ENCODE measurements at regions of chr5 and their contacts with region 1.

Region 1: GRCh38 chr5:67301285-67301903 is 104.8 kb upstream of the CD180 start:
- DNase-seq: peak; percentile 88
- H3K4me3 ChIP-seq: no peak overlapping the region
- H3K27ac ChIP-seq: peak overlapping the region; percentile 90
- H3K4me1 ChIP-seq: peaks cover 56% of the 10 kb centered on the region
- H3K27me3 ChIP-seq: no peaks in the 10 kb centered on the region
- CTCF ChIP-seq: no peak
- POLR2A ChIP-seq: peak; percentile 20

Region 2: GRCh38 chr5:66840511-66841013 is 460.8 kb before region 1 on chr5:
- CTCF ChIA-PET with region 1: no interaction called
- POLR2A ChIA-PET with region 1: no interaction called
- dilution Hi-C with region 1: no loop called
- intact Hi-C with region 1: loop called (anchors 10 kb)
- DNase-seq: no peak
- H3K4me3 ChIP-seq: no peak overlapping the region
- H3K27ac ChIP-seq: no peak overlapping the region
- H3K4me1 ChIP-seq: peaks cover 29% of the 10 kb centered on the region
- H3K27me3 ChIP-seq: no peaks in the 10 kb centered on the region
- CTCF ChIP-seq: no peak
- POLR2A ChIP-seq: no peak

Region 3: GRCh38 chr5:67268231-67269021 is 33.0 kb before region 1 on chr5:
- CTCF ChIA-PET with region 1: interaction called, 6 read pairs
- POLR2A ChIA-PET with region 1: no interaction called
- dilution Hi-C with region 1: no loop called
- intact Hi-C with region 1: loop called (anchors 1 kb)
- DNase-seq: peak; percentile 84
- H3K4me3 ChIP-seq: peak overlapping the region in 1 of 3 experiments; percentile 30
- H3K27ac ChIP-seq: peak overlapping the region; percentile 78
- H3K4me1 ChIP-seq: peaks cover 25% of the 10 kb centered on the region
- H3K27me3 ChIP-seq: no peaks in the 10 kb centered on the region
- CTCF ChIP-seq: no peak
- POLR2A ChIP-seq: no peak

Region 4: GRCh38 chr5:67404256-67405100 is 103.1 kb after region 1 on chr5:
- CTCF ChIA-PET with region 1: no interaction called
- POLR2A ChIA-PET with region 1: no interaction called
- dilution Hi-C with region 1: no loop called
- intact Hi-C with region 1: loop called (anchors 2 kb)
- DNase-seq: peak; percentile 90
- H3K4me3 ChIP-seq: no peak overlapping the region
- H3K27ac ChIP-seq: peak overlapping the region; percentile 100
- H3K4me1 ChIP-seq: peaks cover 35% of the 10 kb centered on the region
- H3K27me3 ChIP-seq: no peaks in the 10 kb centered on the region
- CTCF ChIP-seq: no peak
- POLR2A ChIP-seq: no peak

Region 5: DNA sequence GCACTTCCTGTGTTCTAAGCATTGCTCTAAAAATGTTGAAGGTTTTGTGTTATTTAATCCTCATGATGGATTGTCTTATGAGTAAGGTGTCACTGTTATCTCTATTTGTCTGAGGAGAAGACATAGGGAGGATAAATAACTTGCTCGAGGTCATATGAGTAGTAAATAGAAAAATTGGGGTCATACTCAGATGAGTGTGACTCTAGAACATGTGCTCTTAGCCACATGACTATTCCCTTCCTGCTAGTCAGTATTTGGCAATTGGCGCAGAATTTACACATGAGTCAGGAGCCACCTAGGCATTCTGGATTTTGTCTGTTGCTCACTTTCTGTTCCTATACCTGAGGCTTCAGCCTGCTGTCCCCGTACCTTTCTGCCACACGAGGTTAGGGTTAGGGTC is 129.8 kb after region 1 on chr5:
- CTCF ChIA-PET with region 1: no interaction called
- POLR2A ChIA-PET with region 1: no interaction called
- dilution Hi-C with region 1: no loop called
- intact Hi-C with region 1: no loop called
- DNase-seq: no peak
- H3K4me3 ChIP-seq: no peak overlapping the region
- H3K27ac ChIP-seq: no peak overlapping the region
- H3K4me1 ChIP-seq: no peaks in the 10 kb centered on the region
- H3K27me3 ChIP-seq: no peaks in the 10 kb centered on the region
- CTCF ChIP-seq: no peak
- POLR2A ChIP-seq: no peak

Region 6: GRCh38 chr5:67998709-67999261 is 697.4 kb after region 1 on chr5:
- CTCF ChIA-PET with region 1: no interaction called
- POLR2A ChIA-PET with region 1: no interaction called
- dilution Hi-C with region 1: no loop called
- intact Hi-C with region 1: loop called (anchors 2 kb)
- DNase-seq: peak; percentile 82
- H3K4me3 ChIP-seq: no peak overlapping the region
- H3K27ac ChIP-seq: peak overlapping the region; percentile 85
- H3K4me1 ChIP-seq: peaks cover 14% of the 10 kb centered on the region
- H3K27me3 ChIP-seq: no peaks in the 10 kb centered on the region
- CTCF ChIP-seq: no peak
- POLR2A ChIP-seq: peak; percentile 23